ENCODE measurements at regions of chr11 and their contacts with region 1.

Region 1: DNA sequence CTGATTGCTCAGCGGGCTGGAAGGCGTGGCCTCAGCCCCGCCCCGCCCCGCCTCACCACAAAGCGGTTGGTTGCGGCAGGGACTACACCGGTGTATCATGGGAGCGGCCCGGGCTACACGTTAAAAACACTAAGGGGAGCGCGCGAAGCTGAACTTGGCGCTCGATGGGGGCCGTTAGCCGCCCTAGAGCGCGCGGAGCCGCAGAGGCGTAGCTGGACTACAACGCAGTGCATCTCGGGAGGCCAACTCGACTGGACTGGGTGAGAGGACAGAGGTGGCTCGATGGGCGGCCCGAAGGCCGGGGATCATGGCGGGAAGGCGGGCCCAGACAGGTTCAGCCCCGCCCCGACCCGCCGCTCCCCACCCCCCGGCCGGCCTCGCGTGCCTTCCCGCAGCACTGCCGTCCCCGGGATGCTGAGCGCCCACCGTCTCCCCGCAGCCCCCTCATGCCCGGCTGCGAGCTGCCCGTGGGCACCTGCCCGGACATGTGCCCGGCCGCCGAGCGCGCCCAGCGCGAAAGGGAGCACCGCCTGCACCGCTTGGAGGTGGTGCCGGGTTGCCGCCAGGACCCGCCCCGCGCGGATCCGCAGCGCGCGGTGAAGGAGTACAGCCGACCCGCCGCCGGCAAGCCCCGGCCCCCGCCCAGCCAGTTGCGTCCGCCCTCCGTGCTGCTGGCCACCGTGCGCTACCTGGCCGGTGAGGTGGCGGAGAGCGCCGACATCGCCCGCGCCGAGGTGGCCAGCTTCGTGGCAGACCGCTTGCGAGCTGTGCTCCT is at the start of gene SAC3D1:
- DNase-seq: peak; percentile 74 to 94 (median 88)
- ATAC-seq: peak; percentile 95
- H3K4me3 ChIP-seq: peak within 1 kb of the TSS; percentile 86
- H3K4me3 Mint-ChIP-seq: peak within 1 kb of the TSS; percentile 90 to 96 (median 94)
- H3K27ac ChIP-seq: peak within 1 kb of the TSS; percentile 78
- H3K27ac Mint-ChIP-seq: peak within 1 kb of the TSS; percentile 69 to 95 (median 92)
- H3K4me1 ChIP-seq: peaks cover 3 to 9% of the 10 kb centered on the region in 2 donors
- H3K4me1 Mint-ChIP-seq: peaks cover 11 to 25% (median 20%) of the 10 kb centered on the region in 7 donors
- H3K27me3 ChIP-seq: no peaks in the 10 kb centered on the region
- H3K27me3 Mint-ChIP-seq: no peaks in the 10 kb centered on the region
- total RNA-seq, gene SAC3D1: 2.7 to 18.2 (median 8.6) TPM

Region 2: DNA sequence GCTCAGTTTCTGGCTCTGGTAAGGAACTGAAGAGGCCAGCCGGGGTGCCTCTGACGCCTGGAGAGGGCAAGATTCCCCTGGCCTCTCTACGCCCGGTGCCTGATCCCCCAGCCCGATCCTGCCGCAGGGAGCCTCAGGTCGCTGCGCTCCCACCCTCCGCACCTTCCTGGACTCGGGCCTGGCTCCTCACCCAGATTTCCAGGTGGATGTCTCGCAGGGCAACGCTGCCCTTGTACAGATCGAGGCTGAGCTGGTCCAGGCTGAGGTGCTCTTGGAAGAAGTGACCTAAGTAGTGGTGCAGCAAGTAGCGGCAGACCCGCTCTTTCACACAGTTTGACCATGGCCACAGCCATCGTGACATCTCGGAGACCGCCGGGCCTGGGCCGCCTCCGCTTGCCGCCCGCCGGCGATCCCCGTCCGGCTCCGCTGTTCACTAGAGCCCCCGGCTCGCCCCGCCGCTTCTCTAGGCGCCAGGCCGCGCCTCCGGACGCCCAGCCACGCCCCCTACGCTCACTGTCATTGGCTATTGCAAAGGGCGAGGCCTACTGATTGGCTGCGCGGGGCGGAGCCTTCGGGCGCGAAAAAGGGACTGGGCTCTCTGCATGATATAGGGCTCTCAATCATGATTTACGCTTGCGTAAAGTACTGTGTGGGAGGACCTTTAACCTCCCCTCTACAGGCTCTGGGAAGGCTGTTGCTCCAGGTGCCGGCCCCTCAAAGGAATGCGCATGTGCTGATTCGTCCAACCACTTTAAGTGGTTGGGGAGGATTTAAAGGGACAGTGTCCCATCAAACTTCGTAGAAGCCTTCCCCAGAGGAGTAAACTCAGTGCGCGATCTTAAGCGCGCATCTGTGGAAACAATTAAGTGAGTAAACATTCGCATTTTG is 124.0 kb before region 1 on chr11 and contains the start of gene ATG2A:
- CTCF ChIA-PET with region 1: no interaction called
- POLR2A ChIA-PET with region 1: no interaction called
- intact Hi-C with region 1: loop called (anchors 2 to 5 kb)
- DNase-seq: peak; percentile 95 to 100 (median 99)
- ATAC-seq: peak; percentile 97
- H3K4me3 ChIP-seq: peak within 1 kb of the TSS; percentile 92
- H3K4me3 Mint-ChIP-seq: peak within 1 kb of the TSS; percentile 88 to 98 (median 91)
- H3K27ac ChIP-seq: peak within 1 kb of the TSS; percentile 83
- H3K27ac Mint-ChIP-seq: peak within 1 kb of the TSS; percentile 81 to 99 (median 91)
- H3K4me1 ChIP-seq: peaks cover 18 to 22% of the 10 kb centered on the region in 2 donors
- H3K4me1 Mint-ChIP-seq: peaks cover 14 to 33% (median 25%) of the 10 kb centered on the region in 7 donors
- H3K27me3 ChIP-seq: no peaks in the 10 kb centered on the region
- H3K27me3 Mint-ChIP-seq: no peaks in the 10 kb centered on the region
- total RNA-seq, gene ATG2A: 30.6 to 105 (median 36.2) TPM

Region 3: DNA sequence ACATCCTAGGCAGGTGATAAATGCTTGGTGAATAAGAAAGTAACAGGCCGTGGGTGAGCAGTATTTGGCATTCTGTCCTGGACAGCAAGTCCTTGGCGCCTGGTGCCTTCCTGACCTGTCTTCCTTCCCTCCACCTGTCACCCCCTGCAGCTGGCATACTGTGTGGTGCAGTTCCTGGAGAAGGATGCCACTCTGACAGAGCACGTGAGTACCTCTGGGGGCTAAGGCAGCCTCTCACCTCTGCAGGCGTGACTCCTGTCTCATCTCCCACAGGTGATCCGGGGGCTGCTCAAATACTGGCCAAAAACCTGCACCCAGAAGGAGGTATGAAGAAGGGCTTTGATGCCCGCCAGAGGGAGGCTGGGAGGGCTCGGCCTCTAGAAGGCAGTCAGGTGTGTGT is 109.7 kb before region 1 on chr11:
- CTCF ChIA-PET with region 1: no interaction called
- POLR2A ChIA-PET with region 1: no interaction called
- intact Hi-C with region 1: no loop called
- DNase-seq: no peak
- ATAC-seq: no peak
- H3K4me3 ChIP-seq: no peak overlapping the region
- H3K4me3 Mint-ChIP-seq: no peak overlapping the region
- H3K27ac ChIP-seq: no peak overlapping the region
- H3K27ac Mint-ChIP-seq: no peak overlapping the region
- H3K4me1 ChIP-seq: no peaks in the 10 kb centered on the region
- H3K4me1 Mint-ChIP-seq: peaks cover 0 to 4% (median 0%) of the 10 kb centered on the region in 7 donors
- H3K27me3 ChIP-seq: no peaks in the 10 kb centered on the region
- H3K27me3 Mint-ChIP-seq: no peaks in the 10 kb centered on the region

Region 4: GRCh38 chr11:65027213-65028067 is 13.6 kb before region 1 on chr11 and contains the start of gene SNX15:
- CTCF ChIA-PET with region 1: interaction called, 3 read pairs
- POLR2A ChIA-PET with region 1: interaction called, 20 read pairs
- intact Hi-C with region 1: loop called (anchors 1 kb)
- DNase-seq: peak; percentile 61 to 95 (median 94)
- ATAC-seq: peak; percentile 97
- H3K4me3 ChIP-seq: peak within 1 kb of the TSS; percentile 41
- H3K4me3 Mint-ChIP-seq: peak within 1 kb of the TSS; percentile 66 to 91 (median 83)
- H3K27ac ChIP-seq: peak within 1 kb of the TSS; percentile 59
- H3K27ac Mint-ChIP-seq: peak within 1 kb of the TSS; percentile 59 to 95 (median 87)
- H3K4me1 ChIP-seq: peaks cover 9 to 14% of the 10 kb centered on the region in 2 donors
- H3K4me1 Mint-ChIP-seq: peaks cover 12 to 24% (median 21%) of the 10 kb centered on the region in 7 donors
- H3K27me3 ChIP-seq: no peaks in the 10 kb centered on the region
- H3K27me3 Mint-ChIP-seq: no peaks in the 10 kb centered on the region
- total RNA-seq, gene SNX15: 13.1 to 29.0 (median 21.7) TPM

Region 5: GRCh38 chr11:65078151-65078550 is 37.1 kb after region 1 on chr11:
- CTCF ChIA-PET with region 1: interaction called, 3 read pairs
- POLR2A ChIA-PET with region 1: no interaction called
- intact Hi-C with region 1: loop called in 1 of 2 experiments (anchors 1 kb)
- DNase-seq: peak; percentile 47 to 71 (median 64)
- ATAC-seq: peak; percentile 97
- H3K4me3 ChIP-seq: no peak overlapping the region
- H3K4me3 Mint-ChIP-seq: peak overlapping the region in 1 of 10 donors; percentile 48
- H3K27ac ChIP-seq: no peak overlapping the region
- H3K27ac Mint-ChIP-seq: peak overlapping the region; percentile 9 to 83 (median 63)
- H3K4me1 ChIP-seq: no peaks in the 10 kb centered on the region
- H3K4me1 Mint-ChIP-seq: peaks cover 3 to 48% (median 7%) of the 10 kb centered on the region in 7 donors
- H3K27me3 ChIP-seq: no peaks in the 10 kb centered on the region
- H3K27me3 Mint-ChIP-seq: no peaks in the 10 kb centered on the region

Region 6: GRCh38 chr11:65095974-65096806 is 55.2 kb after region 1 on chr11 and contains the start of gene VPS51:
- CTCF ChIA-PET with region 1: no interaction called
- POLR2A ChIA-PET with region 1: interaction called, 4 read pairs
- intact Hi-C with region 1: loop called in 1 of 2 experiments (anchors 1 kb)
- DNase-seq: peak; percentile 71 to 92 (median 87)
- ATAC-seq: peak; percentile 93
- H3K4me3 ChIP-seq: peak within 1 kb of the TSS; percentile 92
- H3K4me3 Mint-ChIP-seq: peak within 1 kb of the TSS; percentile 83 to 97 (median 94)
- H3K27ac ChIP-seq: peak within 1 kb of the TSS; percentile 88
- H3K27ac Mint-ChIP-seq: peak within 1 kb of the TSS; percentile 89 to 98 (median 97)
- H3K4me1 ChIP-seq: peaks cover 9 to 15% of the 10 kb centered on the region in 2 donors
- H3K4me1 Mint-ChIP-seq: peaks cover 8 to 28% (median 19%) of the 10 kb centered on the region in 7 donors
- H3K27me3 ChIP-seq: no peaks in the 10 kb centered on the region
- H3K27me3 Mint-ChIP-seq: no peaks in the 10 kb centered on the region
- total RNA-seq, gene VPS51: 159 to 269 (median 256) TPM

Region 7: GRCh38 chr11:65261591-65262380 is 220.8 kb after region 1 on chr11 and contains the start of gene POLA2:
- CTCF ChIA-PET with region 1: no interaction called
- POLR2A ChIA-PET with region 1: no interaction called
- intact Hi-C with region 1: loop called in 1 of 2 experiments (anchors 2 kb)
- DNase-seq: peak; percentile 94 to 99 (median 98)
- ATAC-seq: peak; percentile 96
- H3K4me3 ChIP-seq: peak within 1 kb of the TSS; percentile 88
- H3K4me3 Mint-ChIP-seq: peak within 1 kb of the TSS; percentile 83 to 95 (median 92)
- H3K27ac ChIP-seq: peak within 1 kb of the TSS; percentile 88
- H3K27ac Mint-ChIP-seq: peak within 1 kb of the TSS; percentile 91 to 98 (median 97)
- H3K4me1 ChIP-seq: peaks cover 9 to 18% of the 10 kb centered on the region in 2 donors
- H3K4me1 Mint-ChIP-seq: peaks cover 20 to 62% (median 50%) of the 10 kb centered on the region in 7 donors
- H3K27me3 ChIP-seq: no peaks in the 10 kb centered on the region
- H3K27me3 Mint-ChIP-seq: peaks cover 0 to 2% (median 0%) of the 10 kb centered on the region in 5 donors
- total RNA-seq, gene POLA2: 13.4 to 51.6 (median 27.8) TPM